ENCODE measurements at regions of chr7 and their contacts with region 1.

Region 1: GRCh38 chr7:145092766-145093165 is 256.9 kb upstream of the TPK1 start:
- DNase-seq: no peak

Region 2: GRCh38 chr7:144691240-144691639 is 401.5 kb before region 1 on chr7:
- intact Hi-C with region 1: loop called in 1 of 2 experiments (anchors 5 kb)
- DNase-seq: no peak

Measured in posterior vena cava (tissue), 2 donors.